ENCODE measurements at regions of chr5 and their contacts with region 1.

Region 1: GRCh38 chr5:41856644-41857491 is 13.4 kb downstream of the OXCT1 start:
- DNase-seq: peak; percentile 93
- ATAC-seq: peak; percentile 94
- H3K4me3 ChIP-seq: no peak overlapping the region
- H3K27ac ChIP-seq: no peak overlapping the region
- H3K4me1 ChIP-seq: no peaks in the 10 kb centered on the region
- H3K27me3 ChIP-seq: no peaks in the 10 kb centered on the region
- CTCF ChIP-seq: peak; percentile 95

Region 2: DNA sequence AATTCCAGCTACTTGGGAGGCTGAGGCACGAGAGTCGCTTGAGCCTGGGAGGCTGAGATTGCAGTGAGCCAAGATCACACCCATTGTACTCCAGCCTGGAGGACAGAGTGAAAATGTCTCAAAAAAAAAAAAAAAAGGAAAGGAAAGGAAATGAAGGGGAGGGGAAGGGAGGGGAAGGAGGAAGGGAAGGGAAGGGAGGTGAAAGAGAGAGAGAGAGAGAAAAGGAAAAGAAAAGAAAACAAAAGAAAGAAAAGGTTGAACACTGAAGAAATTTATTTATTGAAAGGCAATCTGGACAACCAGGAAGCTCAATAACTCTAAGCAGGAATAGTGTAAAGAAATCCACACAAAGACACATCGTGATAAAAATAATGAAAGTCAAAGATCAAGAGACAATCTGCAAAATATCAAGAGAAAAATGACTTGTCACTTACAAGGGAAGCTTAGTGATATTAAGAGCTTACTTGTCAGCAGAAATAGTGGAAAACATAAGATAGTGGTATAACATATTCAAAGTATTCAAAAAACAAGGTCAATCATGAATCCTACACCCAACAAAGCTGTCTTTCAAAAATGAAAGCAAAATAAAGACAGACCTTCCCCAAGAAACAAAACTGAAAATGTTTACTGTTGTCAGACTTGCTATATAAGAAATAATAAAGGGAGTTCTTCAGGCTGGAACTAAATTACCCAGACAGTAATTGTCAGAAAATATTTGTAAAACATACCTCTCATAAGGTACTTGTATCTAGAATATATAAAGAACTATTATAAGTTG is 36.4 kb after region 1 on chr5:
- CTCF ChIA-PET with region 1: no interaction called
- POLR2A ChIA-PET with region 1: no interaction called
- intact Hi-C with region 1: no loop called
- DNase-seq: no peak
- ATAC-seq: no peak
- H3K4me3 ChIP-seq: no peak overlapping the region
- H3K27ac ChIP-seq: no peak overlapping the region
- H3K4me1 ChIP-seq: peaks cover 12% of the 10 kb centered on the region
- H3K27me3 ChIP-seq: no peaks in the 10 kb centered on the region
- CTCF ChIP-seq: no peak

Region 3: GRCh38 chr5:41924872-41925554 is 68.1 kb after region 1 on chr5 and contains the start of gene FBXO4:
- CTCF ChIA-PET with region 1: interaction called, 3 read pairs
- POLR2A ChIA-PET with region 1: no interaction called
- intact Hi-C with region 1: loop called (anchors 1 kb)
- DNase-seq: peak; percentile 89
- ATAC-seq: peak; percentile 93
- H3K4me3 ChIP-seq: peak within 1 kb of the TSS; percentile 84
- H3K27ac ChIP-seq: peak within 1 kb of the TSS; percentile 74
- H3K4me1 ChIP-seq: peaks cover 30% of the 10 kb centered on the region
- H3K27me3 ChIP-seq: no peaks in the 10 kb centered on the region
- CTCF ChIP-seq: peak; percentile 74
- total RNA-seq, gene FBXO4: 11.5 and 18.1 TPM in 2 replicates

Region 4: DNA sequence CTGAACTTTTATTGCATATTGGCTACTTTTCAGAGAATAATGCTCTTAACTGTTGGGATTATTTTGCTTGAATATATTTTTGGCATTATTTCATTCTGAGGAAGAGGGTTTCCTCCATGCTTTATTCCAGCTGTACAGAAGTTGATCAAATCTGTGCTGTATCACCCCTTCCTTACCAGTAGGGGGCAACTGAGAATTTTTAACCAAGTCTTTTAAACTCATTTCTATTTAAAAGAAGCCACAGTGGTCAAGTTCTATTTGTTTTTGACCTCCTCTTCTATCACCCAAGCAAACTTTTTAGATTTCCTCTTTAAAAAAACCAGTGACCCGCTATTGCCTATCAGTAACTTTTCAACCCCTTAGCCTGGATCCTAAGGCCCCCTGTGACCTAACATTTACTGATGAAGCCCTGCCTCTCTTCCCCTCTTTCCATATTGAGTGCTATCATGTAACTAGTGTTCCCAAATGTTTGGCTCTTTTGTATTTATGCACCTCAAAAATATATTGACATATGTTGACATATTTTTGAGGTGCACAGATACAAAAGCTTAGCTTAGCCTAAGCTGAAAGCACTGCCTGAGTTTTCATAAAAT is 148.8 kb after region 1 on chr5:
- CTCF ChIA-PET with region 1: no interaction called
- POLR2A ChIA-PET with region 1: no interaction called
- intact Hi-C with region 1: loop called (anchors 5 kb)
- DNase-seq: peak; percentile 62
- ATAC-seq: peak; percentile 49
- H3K4me3 ChIP-seq: no peak overlapping the region
- H3K27ac ChIP-seq: no peak overlapping the region
- H3K4me1 ChIP-seq: no peaks in the 10 kb centered on the region
- H3K27me3 ChIP-seq: no peaks in the 10 kb centered on the region
- CTCF ChIP-seq: peak; percentile 88

Region 5: DNA sequence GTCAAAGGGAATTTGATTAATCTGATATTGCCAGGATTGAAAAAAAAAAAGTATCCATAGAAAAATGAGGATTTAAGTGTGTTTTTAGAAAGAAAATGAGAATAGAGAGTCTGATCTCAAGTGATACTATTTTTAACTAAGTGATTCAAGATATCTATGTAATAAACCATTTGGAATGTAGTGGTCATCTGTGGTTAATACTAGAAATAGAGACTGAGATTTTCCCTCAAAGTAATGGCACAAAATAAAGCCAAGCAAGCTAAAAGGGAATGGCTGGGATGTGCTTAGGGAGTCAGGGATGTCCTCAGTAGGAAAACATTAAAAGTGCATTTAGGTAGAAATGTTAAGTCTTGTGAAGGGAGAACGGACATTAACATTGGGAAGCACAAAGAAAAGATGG is 158.8 kb after region 1 on chr5:
- CTCF ChIA-PET with region 1: no interaction called
- POLR2A ChIA-PET with region 1: no interaction called
- intact Hi-C with region 1: no loop called
- DNase-seq: no peak
- ATAC-seq: no peak
- H3K4me3 ChIP-seq: no peak overlapping the region
- H3K27ac ChIP-seq: no peak overlapping the region
- H3K4me1 ChIP-seq: peaks cover 5% of the 10 kb centered on the region
- H3K27me3 ChIP-seq: peaks cover 8% of the 10 kb centered on the region; the same call in 1 of the 2 replicates
- CTCF ChIP-seq: no peak

Region 6: GRCh38 chr5:42057254-42057690 is 200.4 kb after region 1 on chr5:
- CTCF ChIA-PET with region 1: interaction called, 44 read pairs
- POLR2A ChIA-PET with region 1: no interaction called
- intact Hi-C with region 1: loop called (anchors 1 kb)
- DNase-seq: peak; percentile 86
- ATAC-seq: peak; percentile 62
- H3K4me3 ChIP-seq: no peak overlapping the region
- H3K27ac ChIP-seq: no peak overlapping the region
- H3K4me1 ChIP-seq: peaks cover 11% of the 10 kb centered on the region; the same call in 1 of the 2 replicates
- H3K27me3 ChIP-seq: peaks cover 9% of the 10 kb centered on the region
- CTCF ChIP-seq: peak; percentile 93

Region 7: DNA sequence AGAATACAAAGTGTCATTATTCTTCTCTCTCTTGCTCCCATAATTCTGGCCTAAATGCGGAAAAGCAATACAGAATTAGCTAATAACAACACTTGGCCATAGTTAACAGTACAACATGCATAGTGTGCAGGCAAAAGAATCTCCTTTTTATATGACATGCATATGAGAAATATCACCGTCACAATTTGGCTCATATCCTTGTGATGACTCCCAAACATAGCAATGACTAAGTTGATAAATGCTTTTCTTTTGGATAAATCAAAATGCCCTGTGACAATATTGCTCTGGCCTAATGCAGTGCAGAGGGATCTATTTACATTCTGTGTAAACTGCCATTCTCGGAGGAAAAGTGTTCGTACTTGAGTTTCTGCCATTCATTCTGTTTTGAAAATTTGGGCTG is 444.5 kb after region 1 on chr5:
- CTCF ChIA-PET with region 1: no interaction called
- POLR2A ChIA-PET with region 1: no interaction called
- intact Hi-C with region 1: no loop called
- DNase-seq: peak; percentile 98
- ATAC-seq: peak; percentile 90
- H3K4me3 ChIP-seq: peak overlapping the region; percentile 26
- H3K27ac ChIP-seq: peak overlapping the region; percentile 79
- H3K4me1 ChIP-seq: peaks cover 28% of the 10 kb centered on the region
- H3K27me3 ChIP-seq: no peaks in the 10 kb centered on the region
- CTCF ChIP-seq: no peak

Region 8: GRCh38 chr5:42889311-42889933 is 1032.6 kb after region 1 on chr5:
- CTCF ChIA-PET with region 1: interaction called, 4 read pairs
- POLR2A ChIA-PET with region 1: no interaction called
- intact Hi-C with region 1: loop called (anchors 10 kb)
- DNase-seq: peak; percentile 96
- ATAC-seq: peak; percentile 89
- H3K4me3 ChIP-seq: no peak overlapping the region
- H3K27ac ChIP-seq: no peak overlapping the region
- H3K4me1 ChIP-seq: peaks cover 20% of the 10 kb centered on the region
- H3K27me3 ChIP-seq: no peaks in the 10 kb centered on the region
- CTCF ChIP-seq: peak; percentile 97

Measured in PC-3 (cell line).